Heart right ventricle (tissue), 16 donors: ENCODE measurements at regions of chr4 and their contacts with region 1.

Region 1: GRCh38 chr4:134691915-134692314 is 490.3 kb upstream of the PABPC4L start:
- DNase-seq: no peak
- ATAC-seq: no peak
- H3K4me3 ChIP-seq: no peak overlapping the region
- H3K27ac ChIP-seq: no peak overlapping the region
- H3K4me1 ChIP-seq: no peaks in the 10 kb centered on the region
- H3K27me3 ChIP-seq: no peaks in the 10 kb centered on the region
- CTCF ChIP-seq: no peak

Region 2: DNA sequence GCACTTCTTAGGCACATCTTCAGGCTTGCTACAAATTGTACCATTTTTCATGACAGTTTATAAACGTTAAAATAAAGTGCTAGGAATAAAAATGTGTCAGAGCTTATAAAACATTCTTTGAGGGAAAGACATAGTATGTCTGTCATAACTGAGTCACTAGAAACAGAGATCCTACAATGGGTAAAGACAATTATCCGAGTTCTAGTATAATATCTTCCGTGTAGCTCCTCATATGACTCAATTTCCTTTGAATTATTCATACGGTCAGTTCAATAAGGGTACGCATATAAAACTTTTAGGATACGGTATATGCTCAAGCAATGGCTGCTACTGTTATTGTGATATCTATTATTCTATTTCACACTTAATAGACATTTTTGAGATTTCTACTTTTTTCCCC is 1193.8 kb before region 1 on chr4:
- intact Hi-C with region 1: loop called in 1 of 10 experiments (anchors 5 kb)
- DNase-seq: no peak
- ATAC-seq: no peak
- H3K4me3 ChIP-seq: no peak overlapping the region
- H3K27ac ChIP-seq: no peak overlapping the region
- H3K4me1 ChIP-seq: no peaks in the 10 kb centered on the region
- H3K27me3 ChIP-seq: no peaks in the 10 kb centered on the region
- CTCF ChIP-seq: no peak